ENCODE measurements at regions of chr7 and their contacts with region 1.

Region 1: GRCh38 chr7:50212666-50213621 is 91.6 kb upstream of the IKZF1 start:
- DNase-seq: peak in 4 of 14 experiments; percentile 52 to 59 (median 56)
- ATAC-seq: peak; percentile 47
- H3K4me3 ChIP-seq: no peak overlapping the region
- H3K4me3 Mint-ChIP-seq: peak overlapping the region; percentile 46
- H3K27ac ChIP-seq: no peak overlapping the region
- H3K27ac Mint-ChIP-seq: peak overlapping the region; percentile 92
- H3K4me1 ChIP-seq: peaks cover 94% of the 10 kb centered on the region
- H3K4me1 Mint-ChIP-seq: peaks cover 98% of the 10 kb centered on the region
- H3K27me3 ChIP-seq: no peaks in the 10 kb centered on the region
- H3K27me3 Mint-ChIP-seq: no peaks in the 10 kb centered on the region
- CTCF ChIP-seq: no peak

Region 2: DNA sequence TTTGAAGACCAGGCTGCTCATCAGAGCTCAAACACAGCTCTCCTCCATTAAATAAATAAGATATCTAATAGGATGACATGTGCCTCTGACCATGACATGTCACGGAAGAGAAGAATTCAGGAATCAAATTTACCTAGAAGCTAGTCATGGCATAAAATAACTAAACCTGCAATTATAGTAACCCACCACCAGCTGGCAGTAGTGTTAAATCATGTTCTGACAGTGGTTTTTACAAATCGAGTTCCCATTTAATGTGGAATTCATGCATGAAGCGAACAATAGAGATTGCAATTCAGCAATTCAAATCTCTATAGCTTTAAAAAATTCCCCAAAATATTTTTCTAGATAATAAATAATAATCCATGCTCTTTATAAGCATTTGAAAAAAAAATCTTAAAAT is 17.0 kb after region 1 on chr7:
- CTCF ChIA-PET with region 1: interaction called, 3 read pairs
- POLR2A ChIA-PET with region 1: interaction called, 27 read pairs
- intact Hi-C with region 1: loop called in 1 of 2 experiments (anchors 2 kb)
- DNase-seq: peak in 4 of 14 experiments; percentile 36 to 45 (median 44)
- ATAC-seq: no peak
- H3K4me3 ChIP-seq: no peak overlapping the region
- H3K4me3 Mint-ChIP-seq: no peak overlapping the region
- H3K27ac ChIP-seq: no peak overlapping the region
- H3K27ac Mint-ChIP-seq: no peak overlapping the region
- H3K4me1 ChIP-seq: peaks cover 20% of the 10 kb centered on the region
- H3K4me1 Mint-ChIP-seq: peaks cover 42% of the 10 kb centered on the region
- H3K27me3 ChIP-seq: no peaks in the 10 kb centered on the region
- H3K27me3 Mint-ChIP-seq: no peaks in the 10 kb centered on the region
- CTCF ChIP-seq: peak; percentile 50